ENCODE measurements at regions of chr11 and their contacts with region 1.

Region 1: DNA sequence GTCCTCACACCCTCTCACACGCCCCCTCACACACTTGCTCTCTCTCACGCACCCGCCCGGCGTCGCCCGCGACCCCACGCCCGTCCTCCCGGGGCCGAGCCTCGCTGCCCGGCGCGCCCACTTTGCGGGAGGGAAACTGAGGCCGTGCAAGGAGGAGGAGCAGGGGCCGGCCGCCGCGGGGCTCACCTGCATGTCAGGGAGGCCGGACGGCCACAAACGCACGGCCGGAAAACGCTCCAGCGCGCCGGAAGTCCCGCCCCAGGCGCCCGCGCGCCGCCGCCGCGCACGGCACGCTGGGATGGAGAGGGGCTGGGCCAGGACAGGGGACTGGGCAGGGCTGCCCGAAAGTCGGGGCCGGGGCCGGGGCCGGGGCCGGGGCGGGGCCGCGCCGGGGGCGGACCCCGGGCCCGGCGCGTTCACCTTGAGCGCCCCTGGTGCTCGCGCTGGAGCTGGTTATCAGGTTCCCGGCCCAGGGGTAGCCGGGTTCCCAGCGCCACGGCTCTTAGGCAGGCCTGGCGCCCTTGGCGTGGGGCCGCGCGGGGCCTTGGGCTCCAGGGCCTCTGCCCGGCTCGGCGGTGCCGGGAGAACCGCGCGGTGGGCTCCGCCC is at the start of gene CHID1:
- DNase-seq: peak; percentile 91 to 96
- ATAC-seq: peak; percentile 91
- H3K4me3 ChIP-seq: peak within 1 kb of the TSS; percentile 77 to 82
- H3K27ac ChIP-seq: peak within 1 kb of the TSS in 1 of 2 donors; percentile 16
- H3K4me1 ChIP-seq: peaks cover 0 to 1% of the 10 kb centered on the region in 2 donors
- H3K27me3 ChIP-seq: no peaks in the 10 kb centered on the region
- total RNA-seq, gene CHID1: 55.4 to 77.4 TPM

Region 2: GRCh38 chr11:848380-848931 is 62.2 kb before region 1 on chr11:
- intact Hi-C with region 1: loop called in 1 of 2 experiments (anchors 5 kb)
- DNase-seq: peak in 1 of 2 donors; percentile 88
- ATAC-seq: no peak
- H3K4me3 ChIP-seq: no peak overlapping the region
- H3K27ac ChIP-seq: no peak overlapping the region
- H3K4me1 ChIP-seq: no peaks in the 10 kb centered on the region
- H3K27me3 ChIP-seq: no peaks in the 10 kb centered on the region